ENCODE measurements at regions of chr4 and their contacts with region 1.

Region 1: GRCh38 chr4:109462297-109462696 is 28.7 kb downstream of the SEC24B start:
- DNase-seq: no peak
- CTCF ChIP-seq: no peak

Region 2: GRCh38 chr4:109368661-109369060 is 93.6 kb before region 1 on chr4:
- CTCF ChIA-PET with region 1: no interaction called
- POLR2A ChIA-PET with region 1: no interaction called
- DNase-seq: no peak
- CTCF ChIP-seq: no peak

Region 3: DNA sequence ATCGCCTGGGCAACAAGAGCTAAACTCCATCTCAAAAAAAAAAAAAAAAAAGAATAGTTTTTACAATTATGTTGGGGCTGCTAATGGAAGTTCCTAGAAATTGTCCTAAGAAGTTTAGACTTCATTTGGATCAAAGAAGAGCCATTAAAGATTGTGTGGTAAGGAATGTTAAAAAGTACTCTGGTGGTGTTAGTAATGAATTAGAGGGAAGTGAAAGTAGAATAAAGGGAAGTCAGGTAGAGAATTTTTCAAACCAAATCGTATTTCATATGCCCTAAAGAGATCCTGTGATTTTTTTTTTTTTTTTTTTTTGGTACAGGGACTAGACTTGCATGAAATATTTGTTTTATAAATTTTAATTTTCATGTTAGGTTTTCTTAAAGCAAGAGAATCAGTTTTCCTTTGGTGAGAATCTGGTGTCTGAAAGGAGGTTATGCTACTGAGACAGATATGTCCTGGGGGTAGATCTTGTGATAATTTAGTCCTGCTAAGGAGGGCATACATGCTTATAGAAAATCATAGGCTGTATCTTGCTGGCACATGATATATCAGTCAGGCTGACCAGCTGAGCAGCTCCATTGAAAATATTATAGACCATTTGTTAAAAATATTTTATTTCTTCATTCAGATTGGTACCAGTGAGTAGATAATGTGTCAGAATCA is 18.0 kb before region 1 on chr4:
- CTCF ChIA-PET with region 1: interaction called, 10 read pairs
- POLR2A ChIA-PET with region 1: no interaction called
- DNase-seq: peak; percentile 38
- CTCF ChIP-seq: no peak

Region 4: GRCh38 chr4:109451544-109452273 is 10.6 kb before region 1 on chr4:
- CTCF ChIA-PET with region 1: interaction called, 13 read pairs
- POLR2A ChIA-PET with region 1: no interaction called
- DNase-seq: no peak
- CTCF ChIP-seq: no peak

Measured in GM10248 (cell line).